CD4-positive, alpha-beta memory T cell (primary cell): ENCODE measurements at regions of chr14 and their contacts with region 1.

Region 1: DNA sequence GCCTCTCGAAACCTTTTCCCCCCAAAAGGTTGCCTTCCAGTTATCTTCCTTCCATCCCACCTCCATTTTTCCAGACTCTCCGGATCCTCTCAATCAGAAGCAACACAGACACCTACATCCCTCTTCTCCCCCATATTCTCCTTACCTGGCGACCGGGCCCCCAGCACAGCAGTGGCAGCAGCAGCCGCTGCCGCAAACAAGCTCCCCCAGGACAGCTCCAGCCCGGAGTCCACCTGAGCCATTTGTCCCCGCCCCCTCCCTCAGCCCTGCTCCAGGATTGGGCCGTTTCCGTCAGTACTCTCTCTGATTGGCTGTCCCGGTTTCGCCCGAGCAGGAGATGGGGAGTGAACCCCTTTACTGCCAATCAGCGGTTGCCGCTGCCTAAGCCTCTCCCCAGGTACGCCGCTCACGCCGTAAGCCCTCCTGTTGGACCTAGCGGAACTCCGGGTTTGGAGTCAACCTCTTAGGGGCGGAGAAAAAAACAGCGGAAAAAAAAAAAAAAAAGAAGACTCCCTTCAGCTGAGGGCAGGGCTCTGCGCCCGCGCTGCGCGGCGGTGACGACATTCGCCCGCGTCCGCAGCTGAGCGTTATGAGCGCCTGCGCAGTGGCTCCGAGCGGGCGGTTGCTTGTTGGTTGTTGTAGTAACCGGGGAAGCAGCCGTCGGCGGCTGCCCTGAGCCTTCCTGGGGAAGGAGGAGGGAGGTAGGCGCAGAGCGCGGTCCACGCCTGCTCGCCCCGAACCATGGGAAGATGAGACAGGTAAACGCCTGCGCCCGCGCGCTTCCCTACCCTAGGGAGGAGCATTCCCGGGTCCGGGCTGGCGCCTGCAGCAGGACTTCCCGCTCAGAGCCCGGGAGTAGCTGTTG is at the starts of genes ERG28 and TTLL5:
- DNase-seq: peak; percentile 97 to 99 (median 98)
- H3K4me3 ChIP-seq: peak within 1 kb of the TSS; percentile 92 to 95
- H3K4me3 Mint-ChIP-seq: peak within 1 kb of the TSS; percentile 93 to 99 (median 96)
- H3K27ac ChIP-seq: peak within 1 kb of the TSS; percentile 88
- H3K27ac Mint-ChIP-seq: peak within 1 kb of the TSS; percentile 96 to 99 (median 98)
- H3K4me1 ChIP-seq: peaks cover 20% of the 10 kb centered on the region
- H3K4me1 Mint-ChIP-seq: peaks cover 12 to 44% (median 28%) of the 10 kb centered on the region in 4 donors
- H3K27me3 ChIP-seq: no peaks in the 10 kb centered on the region
- H3K27me3 Mint-ChIP-seq: no peaks in the 10 kb centered on the region
- total RNA-seq, gene ERG28: 12.9 to 13.9 TPM
- total RNA-seq, gene TTLL5: 25.3 to 28.2 TPM

Region 2: GRCh38 chr14:74302634-74303577 is 1358.0 kb before region 1 on chr14 and contains the start of gene ABCD4:
- CTCF ChIA-PET with region 1: no interaction called
- POLR2A ChIA-PET with region 1: no interaction called
- intact Hi-C with region 1: loop called (anchors 2 kb)
- DNase-seq: peak; percentile 73 to 85 (median 76)
- H3K4me3 ChIP-seq: peak within 1 kb of the TSS; percentile 58 to 94
- H3K4me3 Mint-ChIP-seq: peak within 1 kb of the TSS; percentile 87 to 99 (median 98)
- H3K27ac ChIP-seq: peak within 1 kb of the TSS; percentile 65
- H3K27ac Mint-ChIP-seq: peak within 1 kb of the TSS; percentile 82 to 98 (median 94)
- H3K4me1 ChIP-seq: peaks cover 29% of the 10 kb centered on the region
- H3K4me1 Mint-ChIP-seq: peaks cover 26 to 51% (median 32%) of the 10 kb centered on the region in 4 donors
- H3K27me3 ChIP-seq: no peaks in the 10 kb centered on the region
- H3K27me3 Mint-ChIP-seq: no peaks in the 10 kb centered on the region
- total RNA-seq, gene ABCD4: 98.3 to 102 TPM

Region 3: GRCh38 chr14:75126679-75127473 is 534.0 kb before region 1 on chr14 and contains the start of gene NEK9:
- CTCF ChIA-PET with region 1: no interaction called
- POLR2A ChIA-PET with region 1: interaction called, 7 read pairs
- intact Hi-C with region 1: loop called (anchors 5 kb)
- DNase-seq: peak; percentile 86 to 92 (median 90)
- H3K4me3 ChIP-seq: peak within 1 kb of the TSS; percentile 80 to 99
- H3K4me3 Mint-ChIP-seq: peak within 1 kb of the TSS; percentile 88 to 98 (median 97)
- H3K27ac ChIP-seq: peak within 1 kb of the TSS; percentile 94
- H3K27ac Mint-ChIP-seq: peak within 1 kb of the TSS; percentile 95 to 99 (median 99)
- H3K4me1 ChIP-seq: peaks cover 42% of the 10 kb centered on the region
- H3K4me1 Mint-ChIP-seq: peaks cover 29 to 52% (median 34%) of the 10 kb centered on the region in 4 donors
- H3K27me3 ChIP-seq: no peaks in the 10 kb centered on the region
- H3K27me3 Mint-ChIP-seq: no peaks in the 10 kb centered on the region
- total RNA-seq, gene NEK9: 129 to 133 TPM

Region 4: DNA sequence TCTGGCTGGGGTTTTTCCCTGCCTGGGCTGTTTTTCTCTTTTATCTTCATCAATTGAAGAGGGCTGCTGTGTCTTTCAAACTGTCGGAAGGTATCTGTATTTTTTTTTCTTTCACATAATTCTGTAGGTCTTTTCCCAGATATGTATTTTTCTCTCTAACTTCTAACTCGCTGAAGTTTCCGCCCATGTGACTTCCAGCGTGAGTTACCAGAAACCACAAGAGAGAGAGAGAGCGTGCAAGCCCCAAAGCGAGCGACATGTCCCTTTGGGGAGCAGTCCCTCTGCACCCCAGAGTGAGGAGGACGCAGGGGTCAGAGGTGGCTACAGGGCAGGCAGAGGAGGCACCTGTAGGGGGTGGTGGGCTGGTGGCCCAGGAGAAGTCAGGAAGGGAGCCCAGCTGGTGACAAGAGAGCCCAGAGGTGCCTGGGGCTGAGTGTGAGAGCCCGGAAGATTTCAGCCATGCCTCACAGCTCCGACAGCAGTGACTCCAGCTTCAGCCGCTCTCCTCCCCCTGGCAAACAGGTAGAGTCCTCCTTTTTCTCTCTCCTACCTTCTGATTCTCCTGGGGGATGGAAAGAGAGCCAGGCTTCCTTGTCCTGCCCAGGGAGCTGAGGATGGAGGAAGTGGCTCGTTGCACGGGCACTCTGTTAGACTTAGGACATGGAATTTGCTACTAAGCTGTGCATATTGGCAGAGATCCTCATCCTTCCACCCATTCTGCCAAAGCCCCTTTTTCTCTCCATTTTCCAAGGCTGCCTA is 138.5 kb before region 1 on chr14 and contains the start of gene BATF:
- CTCF ChIA-PET with region 1: interaction called, 10 read pairs
- POLR2A ChIA-PET with region 1: interaction called, 8 read pairs
- intact Hi-C with region 1: loop called (anchors 1 kb)
- DNase-seq: peak; percentile 79 to 90 (median 82)
- H3K4me3 ChIP-seq: peak within 1 kb of the TSS; percentile 81 to 90
- H3K4me3 Mint-ChIP-seq: peak within 1 kb of the TSS; percentile 96 to 100 (median 99)
- H3K27ac ChIP-seq: peak within 1 kb of the TSS; percentile 88
- H3K27ac Mint-ChIP-seq: peak within 1 kb of the TSS; percentile 94 to 99 (median 98)
- H3K4me1 ChIP-seq: peaks cover 69% of the 10 kb centered on the region
- H3K4me1 Mint-ChIP-seq: peaks cover 47 to 84% (median 65%) of the 10 kb centered on the region in 4 donors
- H3K27me3 ChIP-seq: no peaks in the 10 kb centered on the region
- H3K27me3 Mint-ChIP-seq: no peaks in the 10 kb centered on the region
- total RNA-seq, gene BATF: 17.1 to 20.6 TPM

Region 5: DNA sequence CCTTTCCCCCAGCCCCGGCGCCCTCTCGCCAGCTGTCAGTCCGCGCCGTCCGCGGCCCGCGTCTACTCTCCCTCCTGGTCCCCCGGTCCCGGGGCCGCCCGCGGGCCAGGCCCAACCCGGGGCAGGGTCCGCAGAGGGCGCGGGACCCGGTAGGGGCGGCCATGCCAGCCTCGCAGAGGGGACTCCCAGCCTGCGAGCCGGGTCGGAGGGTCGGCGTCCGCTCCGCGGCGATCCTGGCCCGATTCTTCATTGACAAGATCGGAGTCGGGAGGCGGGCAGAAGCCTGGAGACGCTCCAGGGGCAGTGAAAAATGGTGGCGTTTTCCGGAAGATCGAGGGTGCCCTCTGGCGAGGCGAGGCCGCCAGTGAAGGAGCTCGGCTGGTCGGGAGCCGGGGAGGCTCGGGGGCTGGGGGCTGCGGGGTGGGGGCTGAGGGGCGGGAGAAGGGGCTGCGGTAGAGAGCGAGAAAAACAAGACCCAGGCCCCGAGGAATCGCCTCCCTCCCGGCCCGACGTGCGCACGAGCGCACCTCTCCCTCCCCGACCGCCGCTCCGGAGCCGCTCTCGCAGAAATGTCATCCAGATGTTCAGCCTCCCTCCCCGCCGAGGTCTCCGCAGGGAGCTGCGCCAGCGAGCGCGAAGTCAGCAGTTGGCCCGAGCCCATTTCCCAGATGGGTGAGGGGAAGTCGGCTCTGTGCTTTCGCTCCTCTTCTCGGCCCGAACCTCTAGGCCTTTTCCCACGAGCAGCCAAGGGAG is 321.6 kb after region 1 on chr14:
- CTCF ChIA-PET with region 1: interaction called, 5 read pairs
- POLR2A ChIA-PET with region 1: interaction called, 8 read pairs
- intact Hi-C with region 1: loop called (anchors 5 kb)
- DNase-seq: peak; percentile 79 to 82 (median 80)
- H3K4me3 ChIP-seq: peak overlapping the region; percentile 29 to 72
- H3K4me3 Mint-ChIP-seq: peak overlapping the region; percentile 78 to 93 (median 89)
- H3K27ac ChIP-seq: peak overlapping the region; percentile 71
- H3K27ac Mint-ChIP-seq: peak overlapping the region; percentile 78 to 95 (median 93)
- H3K4me1 ChIP-seq: peaks cover 44% of the 10 kb centered on the region
- H3K4me1 Mint-ChIP-seq: peaks cover 27 to 68% (median 50%) of the 10 kb centered on the region in 4 donors
- H3K27me3 ChIP-seq: no peaks in the 10 kb centered on the region
- H3K27me3 Mint-ChIP-seq: no peaks in the 10 kb centered on the region